ENCODE measurements at regions of chr5 and their contacts with region 1.

Region 1: GRCh38 chr5:78090002-78090401 is 204.5 kb downstream of the AP3B1 start:
- DNase-seq: no peak
- H3K4me3 ChIP-seq: no peak overlapping the region
- H3K27ac ChIP-seq: no peak overlapping the region
- H3K4me1 ChIP-seq: no peaks in the 10 kb centered on the region
- CTCF ChIP-seq: no peak

Region 2: GRCh38 chr5:78334811-78335210 is 244.8 kb after region 1 on chr5:
- CTCF ChIA-PET with region 1: no interaction called
- POLR2A ChIA-PET with region 1: interaction called, 10 read pairs
- intact Hi-C with region 1: no loop called
- DNase-seq: no peak
- H3K4me3 ChIP-seq: no peak overlapping the region
- H3K27ac ChIP-seq: no peak overlapping the region
- H3K4me1 ChIP-seq: no peaks in the 10 kb centered on the region
- CTCF ChIP-seq: no peak

Measured in OCI-LY7 (cell line).